OCI-LY7 (cell line): ENCODE measurements at regions of chr22 and their contacts with region 1.

Region 1: DNA sequence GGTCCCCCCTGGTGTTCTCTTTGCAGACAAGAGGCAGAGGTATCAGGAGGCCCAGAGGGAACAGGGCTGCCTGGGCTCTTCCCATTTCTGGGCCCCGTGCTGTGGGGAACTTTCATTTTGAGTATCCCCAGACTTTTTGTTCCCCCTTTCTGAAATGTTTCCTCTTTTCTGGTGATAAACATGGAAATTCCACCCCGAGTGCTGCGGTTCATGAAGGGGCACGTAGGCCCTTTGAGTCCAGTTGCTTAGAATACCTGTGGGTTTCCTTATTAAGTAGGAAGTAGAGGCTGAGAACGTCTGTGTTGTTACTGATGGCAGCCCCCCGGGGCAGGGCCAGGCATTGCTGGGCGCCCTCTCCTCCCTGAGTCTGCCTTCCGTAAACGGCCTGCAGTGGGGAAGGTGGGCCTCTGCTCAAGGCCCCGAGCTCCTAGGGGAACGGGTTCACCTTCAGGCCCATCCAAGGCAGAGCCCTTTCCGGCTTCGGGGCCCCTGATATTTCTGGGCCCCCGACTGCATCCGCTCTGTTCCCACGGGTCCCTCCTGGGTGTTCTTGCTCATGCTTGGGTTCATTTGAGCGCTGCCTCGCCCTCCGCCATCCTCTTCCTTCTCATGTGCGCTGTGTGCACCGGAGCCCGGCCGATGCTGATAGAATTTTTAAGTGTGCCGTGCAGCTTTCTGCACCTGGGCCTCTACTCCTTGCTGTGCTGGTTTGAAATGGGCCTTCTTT is 12.0 kb downstream of the TBC1D22A start:
- DNase-seq: peak; percentile 86
- H3K4me3 ChIP-seq: peak overlapping the region; percentile 64
- H3K27ac ChIP-seq: peak overlapping the region; percentile 96
- H3K4me1 ChIP-seq: peaks cover 77% of the 10 kb centered on the region
- CTCF ChIP-seq: 0 out of 2 replicates have a peak, but pooled peaks have one; percentile 15

Region 2: GRCh38 chr22:45775569-45776312 is 998.7 kb before region 1 on chr22:
- CTCF ChIA-PET with region 1: no interaction called
- POLR2A ChIA-PET with region 1: no interaction called
- intact Hi-C with region 1: loop called (anchors 10 kb)
- DNase-seq: peak; percentile 86
- H3K4me3 ChIP-seq: peak overlapping the region; percentile 40
- H3K27ac ChIP-seq: peak overlapping the region; percentile 92
- H3K4me1 ChIP-seq: peaks cover 72% of the 10 kb centered on the region
- CTCF ChIP-seq: no peak

Region 3: DNA sequence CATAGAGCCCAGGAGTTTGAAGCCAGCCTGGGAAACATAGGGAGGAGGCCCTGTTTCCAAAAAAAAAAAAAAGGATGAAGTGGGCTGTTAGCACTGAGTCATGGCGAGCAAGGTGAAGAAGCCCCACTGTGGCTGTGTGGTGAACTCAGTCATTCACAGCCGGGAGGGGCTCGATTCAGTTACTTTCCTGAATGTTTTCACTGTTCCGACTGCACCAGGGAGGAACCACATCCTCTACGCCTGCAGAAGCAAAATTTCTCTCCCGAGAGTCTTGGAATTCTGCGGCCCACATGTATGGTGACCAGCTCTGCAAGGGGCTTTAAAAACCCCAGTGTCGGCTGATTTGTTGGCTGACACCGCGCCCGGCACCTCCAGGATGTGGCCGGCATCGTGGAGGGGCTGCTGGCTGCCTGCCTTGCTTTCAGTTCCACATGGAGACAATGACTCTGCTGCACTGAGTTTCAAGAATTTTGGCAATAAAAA is 182.0 kb before region 1 on chr22:
- CTCF ChIA-PET with region 1: no interaction called
- POLR2A ChIA-PET with region 1: no interaction called
- intact Hi-C with region 1: loop called (anchors 5 kb)
- DNase-seq: peak; percentile 82
- H3K4me3 ChIP-seq: peak overlapping the region; percentile 49
- H3K27ac ChIP-seq: peak overlapping the region; percentile 87
- H3K4me1 ChIP-seq: peaks cover 65% of the 10 kb centered on the region
- CTCF ChIP-seq: no peak

Region 4: DNA sequence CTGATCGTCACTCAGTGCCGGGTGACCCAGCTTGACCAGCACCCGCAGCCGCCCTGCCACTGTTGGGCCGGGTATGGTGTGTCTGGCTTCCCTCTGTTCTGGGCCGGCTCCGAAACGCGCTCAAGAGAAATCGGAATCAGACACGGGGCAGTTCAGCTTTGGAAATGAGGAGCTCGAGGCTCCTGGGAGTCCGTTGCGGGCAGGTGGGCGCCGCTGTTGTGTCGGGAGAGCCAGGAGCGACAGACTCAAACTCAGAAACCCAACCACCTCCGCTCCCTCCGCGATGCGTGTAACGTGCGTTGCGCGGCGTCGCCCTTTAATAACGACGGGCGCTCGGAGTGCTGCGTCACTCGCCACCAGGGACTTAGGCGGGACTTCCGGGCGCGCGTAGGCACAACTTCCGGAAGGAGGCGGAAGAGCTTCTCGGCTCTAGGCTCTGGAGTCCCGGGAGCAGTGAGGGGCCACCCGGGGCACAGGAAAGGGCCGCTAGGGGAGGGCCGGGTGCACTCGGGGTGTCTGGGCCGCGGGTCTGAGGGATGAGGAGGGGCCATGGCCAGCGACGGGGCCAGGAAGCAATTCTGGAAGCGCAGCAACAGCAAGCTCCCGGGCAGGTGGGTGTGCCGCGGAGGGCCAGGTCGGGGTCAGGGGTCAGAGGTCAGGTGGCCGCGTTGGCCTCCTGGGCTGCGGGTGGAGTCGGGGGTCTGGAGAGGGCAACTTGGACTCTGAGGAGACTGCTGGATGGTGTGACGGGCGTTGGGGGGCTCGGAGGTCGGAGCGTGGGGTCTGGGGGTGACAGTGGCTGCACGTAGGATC is 12.0 kb before region 1 on chr22 and contains the start of gene TBC1D22A:
- CTCF ChIA-PET with region 1: interaction called, 5 read pairs
- POLR2A ChIA-PET with region 1: interaction called, 34 read pairs
- intact Hi-C with region 1: loop called (anchors 1 kb)
- DNase-seq: peak; percentile 96
- H3K4me3 ChIP-seq: peak within 1 kb of the TSS; percentile 93
- H3K27ac ChIP-seq: peak within 1 kb of the TSS; percentile 70
- H3K4me1 ChIP-seq: peaks cover 43% of the 10 kb centered on the region
- CTCF ChIP-seq: no peak
- total RNA-seq, gene TBC1D22A: 15.0 and 22.3 TPM in 2 replicates

Region 5: DNA sequence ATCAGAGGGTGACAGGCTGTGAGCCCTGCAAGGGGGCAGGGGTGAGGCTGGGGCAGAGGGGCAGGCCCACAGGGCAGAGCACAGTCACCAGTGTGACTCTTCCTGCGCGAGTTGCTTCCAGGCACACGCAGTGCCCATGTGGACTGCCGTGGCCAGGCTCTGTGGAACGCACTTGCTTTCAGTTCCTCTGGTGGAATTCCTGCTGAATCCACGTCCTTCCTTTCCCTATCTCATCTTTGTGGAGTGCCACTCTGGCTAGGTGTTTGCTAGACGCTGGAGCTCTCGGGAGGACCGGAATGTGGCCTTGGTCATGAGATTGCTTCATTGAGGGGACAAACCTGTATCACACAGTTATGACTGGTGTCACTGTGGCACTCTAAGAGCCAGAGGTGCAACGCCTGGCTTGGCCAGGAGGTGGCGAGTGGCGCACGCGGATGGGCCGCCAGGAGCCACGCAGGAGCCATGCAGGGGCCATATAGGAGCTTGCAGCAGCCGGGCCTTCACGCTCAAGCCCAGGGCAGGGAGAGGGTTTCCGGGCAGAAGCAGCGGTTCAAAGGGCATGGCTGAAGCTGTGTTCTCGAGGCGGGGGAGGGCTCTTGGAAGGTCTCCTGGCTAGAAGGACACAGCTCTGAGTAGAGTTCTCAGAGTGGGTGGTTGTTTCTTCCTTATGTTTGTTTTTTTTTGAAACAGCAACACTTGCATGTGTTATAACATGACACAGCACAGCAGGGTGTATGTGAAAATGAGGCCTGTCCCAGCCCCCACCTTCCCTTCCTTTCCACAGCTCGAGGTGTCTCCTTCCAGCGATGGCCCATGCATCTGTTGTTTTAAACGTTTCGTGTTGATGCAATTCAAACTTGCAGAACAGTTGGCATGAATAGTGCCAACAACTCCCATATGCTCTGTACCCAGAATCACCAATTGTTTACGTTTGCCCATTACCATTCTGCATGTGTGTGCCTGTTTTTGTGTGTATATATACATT is 24.2 kb after region 1 on chr22:
- CTCF ChIA-PET with region 1: interaction called, 19 read pairs
- POLR2A ChIA-PET with region 1: interaction called, 4 read pairs
- intact Hi-C with region 1: no loop called
- DNase-seq: peak; percentile 78
- H3K4me3 ChIP-seq: no peak overlapping the region
- H3K27ac ChIP-seq: no peak overlapping the region
- H3K4me1 ChIP-seq: peaks cover 7% of the 10 kb centered on the region
- CTCF ChIP-seq: peak; percentile 94

Region 6: GRCh38 chr22:46934746-46935491 is 160.5 kb after region 1 on chr22:
- CTCF ChIA-PET with region 1: no interaction called
- POLR2A ChIA-PET with region 1: no interaction called
- intact Hi-C with region 1: no loop called
- DNase-seq: no peak
- H3K4me3 ChIP-seq: no peak overlapping the region
- H3K27ac ChIP-seq: no peak overlapping the region
- H3K4me1 ChIP-seq: no peaks in the 10 kb centered on the region
- CTCF ChIP-seq: no peak